ENCODE measurements at regions of chr14 and their contacts with region 1.

Region 1: DNA sequence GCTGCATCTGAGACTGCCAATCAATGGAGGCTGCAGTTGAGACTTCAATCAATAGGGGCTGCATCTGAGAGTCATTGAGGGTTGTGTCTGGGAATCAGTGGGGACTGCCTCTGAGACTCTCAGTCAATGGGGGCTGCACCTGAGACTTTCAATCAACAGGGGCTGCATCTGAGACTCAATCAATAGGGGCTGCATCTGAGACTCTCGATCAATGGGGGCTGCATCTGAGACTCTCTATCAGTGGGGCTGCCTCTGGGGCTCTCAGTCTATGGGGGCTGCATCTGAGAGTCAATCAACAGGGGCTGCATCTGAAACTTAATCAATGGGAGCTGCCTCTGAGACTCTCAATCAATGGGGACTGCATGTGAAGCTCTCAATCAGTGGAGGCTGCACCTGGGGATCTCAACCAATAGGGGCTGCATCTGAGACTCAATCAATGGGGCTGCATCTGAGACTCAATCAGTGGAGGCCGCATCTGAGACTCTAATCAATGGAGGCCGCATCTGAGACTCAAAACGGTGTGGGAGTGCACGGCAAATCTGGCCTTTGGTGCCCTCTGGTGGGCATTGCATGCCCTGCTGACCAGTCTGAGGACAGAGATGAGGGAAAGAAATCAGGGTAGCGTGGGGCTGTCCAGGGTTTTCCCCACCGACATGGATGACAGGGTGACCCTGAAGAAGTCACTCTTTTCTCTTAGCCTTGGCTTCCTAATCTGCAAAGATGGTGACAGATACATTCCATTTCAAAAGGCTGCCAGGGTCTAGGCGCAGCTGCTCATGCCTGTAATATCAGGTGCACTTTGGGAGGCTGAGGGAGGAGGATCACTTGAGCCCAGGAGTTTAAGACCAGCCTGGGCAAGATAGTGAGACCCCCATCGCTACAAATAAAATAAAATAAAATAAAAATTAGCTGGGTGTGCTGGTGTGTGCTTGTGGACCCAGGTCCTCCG is 41.3 kb upstream of the EIF5 start:
- DNase-seq: peak; percentile 45
- ATAC-seq: peak; percentile 95
- H3K4me3 ChIP-seq: no peak overlapping the region
- H3K27ac ChIP-seq: no peak overlapping the region
- H3K4me1 ChIP-seq: peaks cover 0 to 11% of the 10 kb centered on the region in 2 experiments; a peak in 2 of 4 replicates
- H3K27me3 ChIP-seq: no peaks in the 10 kb centered on the region
- CTCF ChIP-seq: peak; percentile 90 to 97 (median 94)
- POLR2A ChIP-seq: no peak
- RAD21 ChIP-seq: peak; percentile 97

Region 2: GRCh38 chr14:102786768-102787167 is 505.9 kb before region 1 on chr14:
- CTCF ChIA-PET with region 1: no interaction called
- POLR2A ChIA-PET with region 1: no interaction called
- RAD21 ChIA-PET with region 1: no interaction called
- intact Hi-C with region 1: no loop called
- DNase-seq: no peak
- ATAC-seq: peak; percentile 43; the same call in 1 of the 2 replicates
- H3K4me3 ChIP-seq: no peak overlapping the region
- H3K27ac ChIP-seq: no peak overlapping the region
- H3K4me1 ChIP-seq: peaks cover 4 to 46% of the 10 kb centered on the region in 2 experiments; a peak in 3 of 4 replicates
- H3K27me3 ChIP-seq: no peaks in the 10 kb centered on the region
- CTCF ChIP-seq: no peak
- POLR2A ChIP-seq: no peak
- RAD21 ChIP-seq: no peak

Region 3: GRCh38 chr14:102973706-102974285 is 318.9 kb before region 1 on chr14:
- CTCF ChIA-PET with region 1: no interaction called
- POLR2A ChIA-PET with region 1: interaction called, 3 read pairs
- RAD21 ChIA-PET with region 1: no interaction called
- intact Hi-C with region 1: loop called (anchors 2 kb)
- DNase-seq: no peak
- ATAC-seq: no peak
- H3K4me3 ChIP-seq: no peak overlapping the region
- H3K27ac ChIP-seq: no peak overlapping the region
- H3K4me1 ChIP-seq: no peaks in the 10 kb centered on the region
- H3K27me3 ChIP-seq: no peaks in the 10 kb centered on the region
- CTCF ChIP-seq: no peak
- POLR2A ChIP-seq: no peak
- RAD21 ChIP-seq: no peak

Region 4: DNA sequence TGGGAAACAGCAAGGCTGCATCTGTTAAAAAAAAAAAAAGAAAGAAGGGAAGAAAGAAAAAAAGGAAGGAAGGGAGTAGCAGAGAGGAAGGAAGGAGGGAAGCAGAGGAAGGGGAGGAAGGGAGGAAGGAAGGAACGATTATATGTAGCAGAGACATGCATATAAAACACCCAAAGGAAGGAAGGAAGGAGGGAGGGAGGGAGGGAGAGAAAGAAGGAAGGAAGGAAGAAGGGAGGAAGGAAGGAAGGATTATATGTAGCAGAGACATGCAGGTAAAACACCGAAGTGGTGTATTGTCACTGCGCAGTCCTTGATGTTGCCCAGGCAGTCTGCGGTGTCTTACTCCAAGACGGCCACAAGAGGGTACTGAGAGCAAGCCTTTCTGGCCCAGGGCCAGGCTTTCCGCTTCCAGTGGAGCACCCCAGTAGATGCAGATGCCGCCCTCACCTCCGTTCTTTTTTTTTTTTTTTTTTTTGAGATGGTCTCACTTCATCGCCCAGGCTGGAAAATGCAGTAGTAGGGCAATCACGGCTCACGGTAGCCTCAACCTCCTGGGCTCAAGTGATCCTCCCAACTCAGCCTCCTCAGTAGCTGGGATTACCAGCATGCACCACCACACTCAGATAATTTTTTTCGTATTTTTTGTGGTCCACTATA is 214.5 kb before region 1 on chr14:
- CTCF ChIA-PET with region 1: no interaction called
- POLR2A ChIA-PET with region 1: no interaction called
- RAD21 ChIA-PET with region 1: interaction called in 1 of 2 experiments, 5 read pairs
- intact Hi-C with region 1: loop called (anchors 1 kb)
- DNase-seq: peak; percentile 84
- ATAC-seq: peak; percentile 43
- H3K4me3 ChIP-seq: no peak overlapping the region
- H3K27ac ChIP-seq: no peak overlapping the region
- H3K4me1 ChIP-seq: peaks cover 25 to 40% of the 10 kb centered on the region in 2 experiments
- H3K27me3 ChIP-seq: no peaks in the 10 kb centered on the region
- CTCF ChIP-seq: peak in 2 of 3 experiments; percentile 71 to 75; a peak in 4 of 6 replicates
- POLR2A ChIP-seq: no peak
- RAD21 ChIP-seq: no peak

Region 5: GRCh38 chr14:103232831-103233319 is 59.8 kb before region 1 on chr14:
- CTCF ChIA-PET with region 1: no interaction called
- POLR2A ChIA-PET with region 1: no interaction called
- RAD21 ChIA-PET with region 1: no interaction called
- intact Hi-C with region 1: no loop called
- DNase-seq: no peak
- ATAC-seq: peak; percentile 29
- H3K4me3 ChIP-seq: no peak overlapping the region
- H3K27ac ChIP-seq: no peak overlapping the region
- H3K4me1 ChIP-seq: peaks cover 11 to 13% of the 10 kb centered on the region in 2 experiments; a peak in 3 of 4 replicates
- H3K27me3 ChIP-seq: no peaks in the 10 kb centered on the region
- CTCF ChIP-seq: no peak
- POLR2A ChIP-seq: no peak
- RAD21 ChIP-seq: no peak

Region 6: DNA sequence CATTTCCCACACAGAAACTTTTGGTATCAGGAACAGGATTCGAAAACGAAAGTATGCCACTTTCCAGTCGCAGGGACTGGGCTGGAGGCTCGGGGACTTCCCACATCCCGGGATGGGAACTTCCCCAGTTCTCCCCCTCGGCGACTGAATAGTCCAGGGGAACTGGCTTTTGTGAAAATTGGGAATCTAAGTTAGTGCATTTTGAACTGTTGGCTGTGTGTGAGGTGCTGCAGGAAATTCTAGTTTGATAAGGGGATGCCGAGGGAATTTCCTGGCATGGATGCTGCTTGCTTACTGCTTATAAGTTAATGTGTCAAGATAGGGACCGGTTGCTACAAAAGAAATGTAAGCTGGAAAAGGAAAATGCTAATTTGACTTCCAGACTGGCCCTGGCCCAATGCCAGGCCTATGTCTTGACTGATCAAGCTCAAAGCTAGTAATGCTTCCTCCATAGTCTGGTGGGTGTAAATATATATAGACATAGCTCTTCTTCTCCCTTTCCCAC is 32.0 kb before region 1 on chr14:
- CTCF ChIA-PET with region 1: no interaction called
- POLR2A ChIA-PET with region 1: no interaction called
- RAD21 ChIA-PET with region 1: no interaction called
- intact Hi-C with region 1: no loop called
- DNase-seq: no peak
- ATAC-seq: peak; percentile 79
- H3K4me3 ChIP-seq: peak overlapping the region; percentile 48 to 63
- H3K27ac ChIP-seq: no peak overlapping the region
- H3K4me1 ChIP-seq: peaks cover 0 to 13% of the 10 kb centered on the region in 2 experiments; a peak in 2 of 4 replicates
- H3K27me3 ChIP-seq: no peaks in the 10 kb centered on the region
- CTCF ChIP-seq: no peak
- POLR2A ChIP-seq: no peak
- RAD21 ChIP-seq: no peak

Region 7: DNA sequence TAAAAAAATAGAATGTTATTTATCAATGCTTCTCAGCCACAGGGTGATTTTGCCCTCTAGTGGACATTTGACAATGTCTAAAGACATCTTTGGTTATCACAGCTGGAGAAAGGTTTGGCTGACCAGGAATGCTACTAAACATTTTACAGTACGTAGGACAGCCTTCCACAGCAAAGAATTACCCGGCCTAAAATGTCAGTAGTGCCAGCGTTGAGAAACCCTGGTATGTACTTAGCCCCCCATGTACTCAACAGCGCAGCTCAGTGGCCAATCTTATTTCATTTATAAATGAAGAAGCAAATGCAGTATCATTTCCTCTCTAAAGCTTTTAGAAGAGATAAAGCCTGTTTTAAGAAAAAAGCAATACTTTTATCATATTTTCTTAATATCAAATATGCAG is 98.3 kb after region 1 on chr14:
- CTCF ChIA-PET with region 1: no interaction called
- POLR2A ChIA-PET with region 1: no interaction called
- RAD21 ChIA-PET with region 1: no interaction called
- intact Hi-C with region 1: loop called (anchors 5 kb)
- DNase-seq: peak; percentile 48
- ATAC-seq: peak; percentile 71
- H3K4me3 ChIP-seq: no peak overlapping the region
- H3K27ac ChIP-seq: no peak overlapping the region; the same call in 1 of the 2 replicates
- H3K4me1 ChIP-seq: peaks cover 25 to 29% of the 10 kb centered on the region in 2 experiments
- H3K27me3 ChIP-seq: no peaks in the 10 kb centered on the region
- CTCF ChIP-seq: peak; percentile 81 to 98 (median 90)
- POLR2A ChIP-seq: no peak
- RAD21 ChIP-seq: peak; percentile 67

Measured in HCT116 (cell line).